ENCODE measurements at regions of chr6 and their contacts with region 1.

Region 1: DNA sequence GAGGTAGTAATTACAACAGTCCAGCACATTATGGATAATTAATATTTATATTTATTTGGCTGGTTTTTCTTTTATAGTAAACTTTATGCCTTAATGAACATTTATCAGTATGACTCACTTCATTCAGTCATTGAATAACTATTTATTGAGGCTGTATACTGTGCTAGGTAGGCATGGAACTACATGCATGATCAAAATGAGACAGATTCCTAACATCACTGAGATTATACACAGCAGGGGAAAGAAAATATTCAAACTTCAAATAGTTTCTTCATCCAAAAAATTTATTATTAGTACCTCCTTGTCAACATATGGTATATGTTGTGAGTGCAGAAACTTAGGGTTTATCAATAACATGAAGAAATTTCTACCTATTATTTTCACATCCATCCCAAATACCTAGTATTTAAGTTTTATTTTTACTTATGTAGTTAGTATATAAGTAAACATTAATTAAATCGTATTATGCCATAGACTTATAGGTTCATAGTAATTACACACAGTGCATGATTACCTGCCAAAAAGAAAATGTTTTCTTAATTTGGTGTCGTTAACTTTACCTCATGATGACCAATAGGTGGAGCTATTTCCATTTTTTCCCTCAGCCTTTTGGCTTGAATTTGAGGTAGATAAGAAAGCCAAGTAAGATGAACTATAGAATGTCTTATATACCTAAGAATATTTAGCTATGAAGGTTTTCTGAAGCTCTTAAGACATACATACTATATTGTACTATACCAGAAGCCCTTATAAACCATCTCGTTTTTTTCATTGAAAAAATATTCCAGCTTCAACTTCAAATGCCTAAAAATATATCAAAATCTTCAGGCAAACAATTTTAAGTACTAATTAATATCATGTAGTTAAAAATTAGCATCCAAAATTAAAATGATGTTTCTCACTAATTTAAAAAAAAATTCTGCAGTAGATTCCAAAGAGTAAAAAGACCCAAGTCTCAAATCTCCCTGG is 12.5 kb upstream of the TMEM30A start:
- DNase-seq: no peak
- H3K4me3 ChIP-seq: no peak overlapping the region
- H3K27ac ChIP-seq: no peak overlapping the region
- H3K4me1 ChIP-seq: peaks cover 0 to 11% of the 10 kb centered on the region in 2 donors
- H3K27me3 ChIP-seq: no peaks in the 10 kb centered on the region
- CTCF ChIP-seq: peak; percentile 54 to 77 (median 61)

Region 2: GRCh38 chr6:75243333-75244062 is 53.6 kb before region 1 on chr6 and contains the start of gene COX7A2:
- intact Hi-C with region 1: no loop called
- DNase-seq: peak; percentile 70 to 96
- H3K4me3 ChIP-seq: peak within 1 kb of the TSS; percentile 81
- H3K27ac ChIP-seq: peak within 1 kb of the TSS; percentile 85 to 87
- H3K4me1 ChIP-seq: peaks cover 0 to 12% of the 10 kb centered on the region in 2 donors
- H3K27me3 ChIP-seq: no peaks in the 10 kb centered on the region
- CTCF ChIP-seq: no peak
- total RNA-seq, gene COX7A2: 360 TPM

Region 3: GRCh38 chr6:75504465-75505228 is 207.6 kb after region 1 on chr6:
- intact Hi-C with region 1: loop called (anchors 5 kb)
- DNase-seq: no peak
- H3K4me3 ChIP-seq: no peak overlapping the region
- H3K27ac ChIP-seq: no peak overlapping the region
- H3K4me1 ChIP-seq: no peaks in the 10 kb centered on the region
- H3K27me3 ChIP-seq: no peaks in the 10 kb centered on the region
- CTCF ChIP-seq: peak; percentile 18 to 56 (median 48)